Aorta (tissue), 5 donors: ENCODE measurements at regions of chr6 and their contacts with region 1.

Region 1: GRCh38 chr6:49519660-49520059 is 19.9 kb downstream of the GLYATL3 start:
- DNase-seq: no peak
- ATAC-seq: no peak
- H3K4me3 ChIP-seq: no peak overlapping the region
- H3K27ac ChIP-seq: no peak overlapping the region
- H3K4me1 ChIP-seq: no peaks in the 10 kb centered on the region
- H3K27me3 ChIP-seq: no peaks in the 10 kb centered on the region

Region 2: DNA sequence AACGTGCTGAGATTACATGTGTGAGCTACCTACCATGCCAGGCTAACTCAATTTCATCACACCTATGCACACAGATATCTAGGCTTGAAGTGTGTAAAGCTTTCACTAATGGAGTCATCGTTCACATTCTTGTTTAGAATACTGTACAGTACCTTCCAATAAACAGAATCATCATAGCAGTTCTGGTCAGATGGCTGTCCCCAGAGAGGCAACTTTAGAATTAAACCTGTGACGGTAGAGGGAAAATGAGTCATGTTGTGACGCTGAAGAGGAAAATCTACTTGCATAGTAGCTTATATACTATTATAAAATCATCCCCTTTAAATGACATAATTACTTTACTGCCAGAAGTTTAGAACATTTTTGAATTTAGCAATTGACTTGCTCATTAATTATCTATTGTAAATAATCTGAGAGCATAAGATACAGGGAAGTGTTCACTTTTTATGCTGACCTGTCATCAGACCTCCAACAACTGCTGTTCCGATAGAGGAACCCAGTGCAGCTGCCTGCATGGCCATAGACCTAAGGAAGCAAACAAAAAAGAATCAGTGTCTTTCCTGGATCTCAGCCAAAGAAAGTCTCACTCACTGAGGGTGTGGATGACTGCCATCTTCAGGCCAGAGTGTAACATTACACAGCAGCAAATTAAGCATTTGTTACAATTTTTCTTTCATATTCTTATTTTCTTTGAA is 87.2 kb after region 1 on chr6:
- intact Hi-C with region 1: loop called in 1 of 2 experiments (anchors 5 kb)
- DNase-seq: peak in 1 of 2 donors; percentile 48
- ATAC-seq: peak; percentile 84
- H3K4me3 ChIP-seq: no peak overlapping the region
- H3K27ac ChIP-seq: no peak overlapping the region
- H3K4me1 ChIP-seq: no peaks in the 10 kb centered on the region
- H3K27me3 ChIP-seq: no peaks in the 10 kb centered on the region